ENCODE measurements at regions of chr19 and their contacts with region 1.

Region 1: DNA sequence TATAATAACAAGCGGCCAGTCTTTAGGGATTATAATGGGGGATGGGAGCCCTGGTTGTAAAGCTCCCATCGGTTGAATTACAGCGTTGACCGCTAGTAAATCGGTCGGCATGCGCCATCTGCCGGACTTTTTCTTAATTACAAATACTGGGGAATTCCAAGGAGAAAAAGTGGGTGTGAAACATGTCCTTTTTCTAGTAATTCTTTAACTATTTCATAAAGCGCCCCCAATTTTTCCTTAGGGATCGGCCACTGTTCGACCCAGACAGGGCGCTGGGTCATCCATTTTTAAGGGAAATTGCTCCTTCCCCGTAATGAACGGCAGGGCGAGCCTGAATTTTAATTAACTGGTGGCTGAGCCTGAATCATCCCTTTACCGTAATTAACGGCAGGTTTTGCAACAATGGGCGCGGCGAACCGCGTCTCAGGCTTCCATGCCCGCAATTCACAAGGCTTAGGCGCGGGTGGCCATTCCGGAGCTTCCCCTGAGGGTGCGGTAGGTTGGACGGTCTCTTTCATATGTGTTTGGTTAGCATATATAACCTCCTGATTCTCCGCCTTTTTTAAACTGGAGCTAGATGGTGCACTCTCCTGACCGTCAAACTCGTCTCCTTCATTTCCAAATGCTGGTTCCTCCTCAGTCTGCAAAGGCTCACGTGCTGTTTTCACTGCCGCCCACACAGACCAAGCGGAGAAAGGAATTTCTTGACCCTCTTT is 30.2 kb upstream of the EVI5L start:
- DNase-seq: no peak
- H3K4me3 ChIP-seq: no peak overlapping the region; the same call in 1 of the 2 replicates
- H3K27me3 ChIP-seq: peaks cover 5% of the 10 kb centered on the region
- CTCF ChIP-seq: peak; percentile 57

Region 2: GRCh38 chr19:7562646-7563393 is 237.0 kb before region 1 on chr19:
- CTCF ChIA-PET with region 1: interaction called, 67 read pairs
- POLR2A ChIA-PET with region 1: no interaction called
- DNase-seq: no peak
- H3K4me3 ChIP-seq: no peak overlapping the region
- H3K27me3 ChIP-seq: no peaks in the 10 kb centered on the region
- CTCF ChIP-seq: no peak

Region 3: DNA sequence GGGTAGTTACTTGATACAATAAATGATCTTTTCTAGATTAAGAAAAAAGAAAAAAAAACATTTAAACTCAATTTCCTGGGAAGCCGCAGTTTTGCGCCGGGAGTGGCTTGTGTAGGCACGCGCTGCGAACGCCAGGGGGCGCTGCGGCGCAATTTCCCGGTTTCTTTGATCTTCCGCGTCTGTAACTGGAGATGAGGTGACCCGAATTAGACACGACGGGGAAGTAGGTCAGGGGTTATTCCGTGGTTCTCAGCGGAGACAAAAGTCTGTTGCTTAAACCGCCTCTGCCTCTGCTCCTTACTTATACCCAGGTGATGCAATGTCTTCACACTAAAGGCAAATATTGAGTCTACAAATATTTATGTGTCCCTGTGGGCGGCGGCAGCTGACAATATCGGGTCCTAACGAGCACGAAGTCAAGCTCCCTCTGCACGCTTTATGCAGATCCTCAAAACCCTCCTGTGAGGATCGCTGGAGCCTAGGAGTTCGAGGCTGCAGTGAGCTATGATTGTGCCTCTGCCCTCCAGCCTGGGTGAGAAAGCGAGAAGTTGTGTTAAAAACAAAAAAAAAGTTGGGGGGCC is 147.6 kb before region 1 on chr19:
- CTCF ChIA-PET with region 1: interaction called, 21 read pairs
- POLR2A ChIA-PET with region 1: no interaction called
- DNase-seq: peak; percentile 19
- H3K4me3 ChIP-seq: no peak overlapping the region; the same call in 1 of the 2 replicates
- H3K27me3 ChIP-seq: peaks cover 3% of the 10 kb centered on the region; the same call in 1 of the 2 replicates
- CTCF ChIP-seq: peak; percentile 97

Region 4: DNA sequence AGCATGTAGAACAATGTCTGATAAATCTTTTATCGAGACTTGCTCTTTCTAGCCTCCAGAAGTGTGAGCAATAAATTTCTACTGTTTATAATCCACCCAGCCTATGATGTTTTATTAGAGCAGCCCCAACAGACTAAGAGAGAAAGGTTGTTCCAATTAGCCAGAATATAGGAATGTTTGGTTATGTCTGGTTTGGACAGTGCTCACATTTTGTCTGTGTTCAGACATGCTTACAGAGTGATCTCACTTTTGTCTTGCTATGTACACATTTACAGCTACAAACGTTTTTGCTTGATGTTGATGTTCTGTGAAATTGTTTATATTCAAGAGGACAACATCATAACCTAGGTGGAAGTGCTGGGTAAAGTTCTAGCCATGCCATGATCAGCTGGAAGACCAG is 12.2 kb after region 1 on chr19:
- CTCF ChIA-PET with region 1: interaction called, 12 read pairs
- POLR2A ChIA-PET with region 1: no interaction called
- DNase-seq: no peak
- H3K4me3 ChIP-seq: no peak overlapping the region
- H3K27me3 ChIP-seq: peaks cover 1% of the 10 kb centered on the region; the same call in 1 of the 2 replicates
- CTCF ChIP-seq: no peak

Region 5: GRCh38 chr19:7819337-7819736 is 19.5 kb after region 1 on chr19:
- CTCF ChIA-PET with region 1: interaction called, 12 read pairs
- POLR2A ChIA-PET with region 1: no interaction called
- DNase-seq: no peak
- H3K4me3 ChIP-seq: no peak overlapping the region
- H3K27me3 ChIP-seq: peaks cover 1% of the 10 kb centered on the region; the same call in 1 of the 2 replicates
- CTCF ChIP-seq: no peak

Region 6: DNA sequence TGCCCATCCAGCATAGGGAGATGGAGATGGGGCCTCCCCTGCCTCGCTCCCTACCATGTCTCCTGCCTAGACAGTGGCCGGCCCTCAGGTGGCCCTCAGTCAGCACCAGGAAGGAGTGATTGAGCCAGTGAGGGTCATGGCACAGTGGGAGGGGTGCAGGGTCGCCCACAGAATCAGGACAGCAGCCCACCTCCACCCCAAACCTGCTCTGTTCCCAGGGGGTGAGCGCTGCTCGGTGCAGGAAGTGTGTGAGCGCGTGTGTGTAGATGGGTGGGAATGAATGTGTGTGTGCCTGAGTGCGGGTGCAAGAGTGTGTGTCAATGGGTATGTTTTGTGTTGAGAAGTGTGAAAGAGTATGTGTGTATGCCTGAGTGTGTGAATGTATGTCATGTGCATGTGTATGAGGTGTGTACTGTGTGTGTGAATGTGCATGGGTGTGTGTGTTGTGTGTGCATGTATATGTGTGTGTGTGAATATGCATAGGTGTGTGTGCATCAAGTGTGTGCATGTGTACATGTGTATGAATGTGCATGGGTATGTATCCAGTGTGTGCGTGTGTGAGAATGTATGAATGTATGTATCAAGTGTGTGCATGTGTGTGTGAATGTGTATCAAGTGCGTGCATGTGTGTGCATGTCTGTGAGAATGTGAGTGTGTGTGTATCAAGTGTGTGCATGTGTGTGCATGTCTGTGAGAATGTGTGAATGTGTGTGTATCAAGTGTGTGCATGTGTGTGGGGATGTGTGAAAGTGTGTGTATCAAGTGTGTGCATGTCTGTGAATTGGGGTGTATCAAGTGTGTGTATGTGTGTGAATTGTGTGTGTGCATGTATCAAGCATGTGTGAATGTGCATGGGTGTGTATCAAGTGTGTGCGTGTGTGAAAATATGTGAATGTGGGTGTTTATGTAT is 42.2 kb after region 1 on chr19:
- CTCF ChIA-PET with region 1: no interaction called
- POLR2A ChIA-PET with region 1: no interaction called
- DNase-seq: no peak
- H3K4me3 ChIP-seq: no peak overlapping the region
- H3K27me3 ChIP-seq: no peaks in the 10 kb centered on the region
- CTCF ChIP-seq: no peak

Measured in BJ (cell line).